B cell (primary cell): ENCODE measurements at regions of chr19 and their contacts with region 1.

Region 1: DNA sequence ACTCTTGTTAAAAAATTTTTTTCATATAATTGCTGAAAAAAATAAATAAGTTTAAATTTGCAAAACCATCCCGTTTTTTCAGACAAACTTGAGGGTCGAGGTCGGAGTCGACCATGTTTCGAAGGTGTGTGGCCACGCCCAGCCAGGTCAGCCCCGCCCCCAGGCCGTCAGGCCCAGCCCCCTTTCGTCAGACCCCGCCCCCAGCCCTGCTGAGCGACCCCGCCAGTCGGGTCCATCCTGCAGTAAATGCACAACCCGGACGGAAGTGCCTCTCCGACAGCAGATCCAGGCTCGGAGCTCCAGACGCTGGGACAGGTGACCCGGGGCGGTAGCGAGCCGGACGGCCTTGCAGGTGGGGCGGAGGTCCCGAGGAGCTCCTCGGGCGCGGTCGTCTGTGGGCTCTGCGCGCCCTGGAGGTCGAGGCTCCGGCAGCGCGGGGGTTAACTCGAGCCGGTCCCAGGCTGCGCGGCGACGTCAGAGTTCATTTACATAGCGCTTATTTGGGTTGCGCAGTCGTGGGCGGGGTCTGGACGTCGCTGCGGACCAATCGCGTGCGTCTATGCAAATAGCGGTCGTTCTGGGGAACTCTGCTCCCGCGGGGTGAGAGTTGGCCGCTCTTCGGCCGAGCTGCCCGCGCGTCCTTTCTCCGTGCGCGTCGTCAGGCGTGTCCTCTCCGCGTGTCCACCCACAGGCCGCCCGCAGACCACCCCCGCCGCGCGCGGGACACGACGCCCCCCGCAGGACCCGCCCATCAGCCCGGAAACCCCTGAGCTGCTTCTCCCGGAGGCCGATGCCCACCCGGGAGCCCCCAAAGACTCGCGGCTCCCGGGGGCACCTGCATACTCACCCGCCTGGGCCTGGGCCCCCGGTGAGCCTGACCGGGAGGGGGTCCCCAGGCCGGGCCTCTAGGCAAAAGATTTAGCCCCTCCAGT is at the start of gene OCEL1:
- DNase-seq: peak; percentile 99
- ATAC-seq: peak; percentile 90
- H3K4me3 ChIP-seq: peak within 1 kb of the TSS; percentile 74 to 81 (median 79)
- H3K4me3 Mint-ChIP-seq: peak within 1 kb of the TSS; percentile 90
- H3K27ac ChIP-seq: peak within 1 kb of the TSS; percentile 75 to 80
- H3K27ac Mint-ChIP-seq: peak within 1 kb of the TSS; percentile 94
- H3K4me1 ChIP-seq: peaks cover 3 to 20% of the 10 kb centered on the region in 2 donors
- H3K4me1 Mint-ChIP-seq: peaks cover 12% of the 10 kb centered on the region
- H3K27me3 ChIP-seq: no peaks in the 10 kb centered on the region
- H3K27me3 Mint-ChIP-seq: no peaks in the 10 kb centered on the region
- CTCF ChIP-seq: no peak
- total RNA-seq, gene OCEL1: 30.5 and 40.4 TPM in 2 replicates

Region 2: GRCh38 chr19:16476401-16476800 is 749.9 kb before region 1 on chr19:
- CTCF ChIA-PET with region 1: no interaction called
- POLR2A ChIA-PET with region 1: interaction called, 10 read pairs
- intact Hi-C with region 1: no loop called
- DNase-seq: no peak
- ATAC-seq: no peak
- H3K4me3 ChIP-seq: no peak overlapping the region
- H3K4me3 Mint-ChIP-seq: no peak overlapping the region
- H3K27ac ChIP-seq: no peak overlapping the region
- H3K27ac Mint-ChIP-seq: no peak overlapping the region
- H3K4me1 ChIP-seq: peaks cover 0 to 6% of the 10 kb centered on the region in 2 donors
- H3K4me1 Mint-ChIP-seq: no peaks in the 10 kb centered on the region
- H3K27me3 ChIP-seq: no peaks in the 10 kb centered on the region
- H3K27me3 Mint-ChIP-seq: no peaks in the 10 kb centered on the region
- CTCF ChIP-seq: no peak

Region 3: GRCh38 chr19:17075035-17075863 is 151.0 kb before region 1 on chr19 and contains the starts of genes HAUS8 and MYO9B:
- CTCF ChIA-PET with region 1: interaction called, 4 read pairs
- POLR2A ChIA-PET with region 1: no interaction called
- intact Hi-C with region 1: loop called (anchors 1 kb)
- DNase-seq: peak; percentile 100
- ATAC-seq: peak; percentile 87
- H3K4me3 ChIP-seq: peak within 1 kb of the TSS; percentile 77 to 93 (median 86)
- H3K4me3 Mint-ChIP-seq: peak within 1 kb of the TSS; percentile 98
- H3K27ac ChIP-seq: peak within 1 kb of the TSS; percentile 79 to 89
- H3K27ac Mint-ChIP-seq: peak within 1 kb of the TSS; percentile 99
- H3K4me1 ChIP-seq: peaks cover 44 to 65% of the 10 kb centered on the region in 2 donors
- H3K4me1 Mint-ChIP-seq: peaks cover 66% of the 10 kb centered on the region
- H3K27me3 ChIP-seq: no peaks in the 10 kb centered on the region
- H3K27me3 Mint-ChIP-seq: no peaks in the 10 kb centered on the region
- CTCF ChIP-seq: no peak
- total RNA-seq, gene HAUS8: 22.4 and 24.9 TPM in 2 replicates
- total RNA-seq, gene MYO9B: 273 and 288 TPM in 2 replicates

Region 4: DNA sequence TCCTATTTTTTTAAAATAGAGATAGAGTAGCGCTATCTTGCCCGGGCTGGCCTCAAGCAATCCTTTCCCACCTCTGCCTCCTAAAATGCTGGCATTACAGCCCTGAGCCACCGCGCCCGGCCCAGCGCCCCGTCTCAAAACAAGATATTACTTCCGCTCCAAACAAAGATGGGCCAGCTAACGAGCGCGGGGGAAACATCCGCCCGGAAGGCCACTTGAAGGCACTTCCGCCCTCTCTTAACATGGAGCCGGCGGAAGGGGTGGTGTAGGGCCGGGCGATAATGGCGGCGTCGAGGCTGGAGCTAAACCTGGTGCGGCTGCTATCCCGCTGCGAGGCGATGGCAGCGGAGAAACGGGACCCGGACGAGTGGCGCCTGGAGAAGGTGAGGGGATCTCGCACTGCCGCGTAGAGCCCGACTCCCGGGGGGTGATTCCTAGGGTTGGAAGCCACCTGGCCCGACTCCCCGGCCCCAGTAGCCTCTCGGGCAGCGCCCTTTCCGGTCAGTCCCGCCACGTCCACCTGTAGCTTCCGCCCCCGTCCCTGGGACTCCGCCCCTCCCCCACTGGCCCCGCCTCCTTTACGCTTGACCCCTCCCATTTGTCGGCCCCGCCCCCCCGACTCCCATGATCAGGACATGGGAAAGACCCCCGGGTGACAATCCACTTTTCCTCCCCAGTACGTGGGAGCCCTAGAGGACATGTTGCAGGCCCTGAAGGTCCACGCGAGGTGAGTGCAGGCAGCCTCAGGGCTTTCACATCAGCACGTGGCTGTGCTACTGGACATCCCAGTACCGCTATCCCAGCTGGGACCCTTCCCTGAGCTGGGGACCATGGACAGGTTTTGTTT is 10.9 kb before region 1 on chr19 and contains the start of gene USE1:
- CTCF ChIA-PET with region 1: interaction called, 13 read pairs
- POLR2A ChIA-PET with region 1: interaction called, 29 read pairs
- intact Hi-C with region 1: loop called (anchors 1 kb)
- DNase-seq: peak; percentile 93
- ATAC-seq: peak; percentile 93
- H3K4me3 ChIP-seq: peak within 1 kb of the TSS; percentile 41 to 94 (median 80)
- H3K4me3 Mint-ChIP-seq: peak within 1 kb of the TSS; percentile 92
- H3K27ac ChIP-seq: peak within 1 kb of the TSS; percentile 91
- H3K27ac Mint-ChIP-seq: peak within 1 kb of the TSS; percentile 97
- H3K4me1 ChIP-seq: peaks cover 10 to 24% of the 10 kb centered on the region in 2 donors
- H3K4me1 Mint-ChIP-seq: peaks cover 19% of the 10 kb centered on the region
- H3K27me3 ChIP-seq: no peaks in the 10 kb centered on the region
- H3K27me3 Mint-ChIP-seq: no peaks in the 10 kb centered on the region
- CTCF ChIP-seq: no peak
- total RNA-seq, gene USE1: 39.9 and 49.5 TPM in 2 replicates

Region 5: DNA sequence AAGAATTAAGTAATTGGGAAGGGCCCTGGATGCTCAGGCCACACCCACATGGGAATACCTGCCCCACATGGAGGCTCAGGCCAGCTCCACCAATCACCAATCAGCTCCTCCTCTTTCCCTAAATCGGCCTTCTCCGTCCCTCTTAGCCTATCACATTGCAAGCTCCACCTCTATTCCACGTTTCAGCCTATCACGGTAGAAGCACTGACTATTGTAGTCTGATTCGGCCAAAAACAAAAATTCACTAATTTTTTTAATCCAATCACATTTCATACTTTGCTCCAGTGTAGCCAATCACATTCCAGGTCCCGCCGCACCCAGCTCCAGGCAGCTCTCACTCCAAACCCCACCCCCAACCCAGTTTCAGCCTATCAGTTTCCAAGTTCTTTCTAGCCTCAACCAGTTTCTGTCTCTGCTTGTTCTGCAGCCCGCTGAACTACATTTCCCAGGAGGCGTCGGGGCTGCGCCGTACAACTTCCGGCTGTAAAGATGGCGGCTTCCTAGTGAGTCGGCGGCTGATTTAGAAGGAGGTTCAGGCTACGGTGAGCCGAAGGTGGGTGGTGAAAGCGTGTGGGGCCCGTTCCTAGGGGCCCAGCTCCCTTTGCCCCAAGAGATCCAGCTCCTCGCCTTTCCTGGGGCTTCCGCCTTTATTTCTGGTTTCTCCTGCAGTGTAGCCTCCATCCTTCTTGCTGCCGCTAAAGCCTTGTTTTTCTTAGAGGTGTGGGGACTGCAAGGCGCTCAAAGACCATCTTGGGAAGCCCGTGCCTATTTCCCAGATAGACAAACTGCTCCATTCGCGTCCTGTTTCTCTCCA is 40.9 kb after region 1 on chr19 and contains the start of gene BABAM1:
- CTCF ChIA-PET with region 1: no interaction called
- POLR2A ChIA-PET with region 1: interaction called, 6 read pairs
- intact Hi-C with region 1: loop called (anchors 1 kb)
- DNase-seq: peak; percentile 98
- ATAC-seq: peak; percentile 89
- H3K4me3 ChIP-seq: peak within 1 kb of the TSS; percentile 76 to 95 (median 87)
- H3K4me3 Mint-ChIP-seq: peak within 1 kb of the TSS; percentile 84
- H3K27ac ChIP-seq: peak within 1 kb of the TSS; percentile 56 to 67
- H3K27ac Mint-ChIP-seq: peak within 1 kb of the TSS; percentile 86
- H3K4me1 ChIP-seq: peaks cover 6 to 24% of the 10 kb centered on the region in 2 donors
- H3K4me1 Mint-ChIP-seq: peaks cover 18% of the 10 kb centered on the region
- H3K27me3 ChIP-seq: no peaks in the 10 kb centered on the region
- H3K27me3 Mint-ChIP-seq: no peaks in the 10 kb centered on the region
- CTCF ChIP-seq: no peak
- total RNA-seq, gene BABAM1: 126 and 129 TPM in 2 replicates